Activated CD8-positive, alpha-beta memory T cell treated with anti-CD3 and anti-CD28 coated beads, Interleukin-2, amount 10 ng/mL, durations not matched to agents 7 days and 5 days (primary cell): ENCODE measurements at regions of chr4 and their contacts with region 1.

Region 1: GRCh38 chr4:15756361-15756861 is 21.7 kb upstream of the CD38 start:
- DNase-seq: peak; percentile 91
- ATAC-seq: peak; percentile 86
- H3K4me3 Mint-ChIP-seq: peak overlapping the region; percentile 66
- H3K27ac Mint-ChIP-seq: peak overlapping the region; percentile 93
- H3K4me1 Mint-ChIP-seq: peaks cover 55% of the 10 kb centered on the region
- H3K27me3 Mint-ChIP-seq: no peaks in the 10 kb centered on the region

Region 2: DNA sequence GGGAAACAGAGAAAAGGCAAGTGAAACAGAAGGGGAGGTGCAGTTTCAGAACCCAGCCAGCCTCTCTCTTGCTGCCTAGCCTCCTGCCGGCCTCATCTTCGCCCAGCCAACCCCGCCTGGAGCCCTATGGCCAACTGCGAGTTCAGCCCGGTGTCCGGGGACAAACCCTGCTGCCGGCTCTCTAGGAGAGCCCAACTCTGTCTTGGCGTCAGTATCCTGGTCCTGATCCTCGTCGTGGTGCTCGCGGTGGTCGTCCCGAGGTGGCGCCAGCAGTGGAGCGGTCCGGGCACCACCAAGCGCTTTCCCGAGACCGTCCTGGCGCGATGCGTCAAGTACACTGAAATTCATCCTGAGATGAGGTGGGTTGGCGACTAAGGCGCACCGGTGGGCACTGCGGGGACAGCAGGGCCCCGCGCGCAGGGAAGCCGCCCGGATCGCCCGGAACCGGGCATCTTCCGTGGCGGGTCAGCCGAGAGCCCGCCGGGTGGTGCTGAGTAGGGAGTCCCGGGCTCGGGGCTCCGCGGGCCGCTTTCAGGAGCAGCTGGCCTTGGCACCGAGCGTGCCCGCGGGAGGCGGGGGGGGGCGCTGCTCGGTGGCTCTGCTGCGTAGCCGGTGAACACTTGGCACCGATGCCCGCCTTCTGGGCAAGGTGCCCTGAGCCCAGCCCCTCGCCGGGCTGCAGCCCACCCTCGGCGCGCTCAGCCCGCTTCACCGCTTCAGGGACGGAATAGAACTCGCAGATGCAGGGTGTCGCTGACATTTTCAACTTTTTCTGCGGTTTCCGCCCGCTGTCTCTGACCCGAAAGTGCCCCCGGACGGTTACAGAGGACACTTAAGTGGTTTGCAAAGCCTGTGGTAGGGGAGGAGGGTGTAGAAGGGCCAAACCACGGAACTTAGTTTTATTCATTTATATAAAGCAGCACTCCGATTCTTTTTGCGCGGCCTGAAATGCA is 22.2 kb after region 1 on chr4 and contains the start of gene CD38:
- CTCF ChIA-PET with region 1: interaction called, 146 read pairs
- DNase-seq: peak; percentile 87
- ATAC-seq: peak; percentile 79
- H3K4me3 Mint-ChIP-seq: peak within 1 kb of the TSS; percentile 96
- H3K27ac Mint-ChIP-seq: peak within 1 kb of the TSS; percentile 90
- H3K4me1 Mint-ChIP-seq: peaks cover 75% of the 10 kb centered on the region
- H3K27me3 Mint-ChIP-seq: peaks cover 16% of the 10 kb centered on the region
- total RNA-seq, gene CD38: 151 to 179 TPM

Region 3: DNA sequence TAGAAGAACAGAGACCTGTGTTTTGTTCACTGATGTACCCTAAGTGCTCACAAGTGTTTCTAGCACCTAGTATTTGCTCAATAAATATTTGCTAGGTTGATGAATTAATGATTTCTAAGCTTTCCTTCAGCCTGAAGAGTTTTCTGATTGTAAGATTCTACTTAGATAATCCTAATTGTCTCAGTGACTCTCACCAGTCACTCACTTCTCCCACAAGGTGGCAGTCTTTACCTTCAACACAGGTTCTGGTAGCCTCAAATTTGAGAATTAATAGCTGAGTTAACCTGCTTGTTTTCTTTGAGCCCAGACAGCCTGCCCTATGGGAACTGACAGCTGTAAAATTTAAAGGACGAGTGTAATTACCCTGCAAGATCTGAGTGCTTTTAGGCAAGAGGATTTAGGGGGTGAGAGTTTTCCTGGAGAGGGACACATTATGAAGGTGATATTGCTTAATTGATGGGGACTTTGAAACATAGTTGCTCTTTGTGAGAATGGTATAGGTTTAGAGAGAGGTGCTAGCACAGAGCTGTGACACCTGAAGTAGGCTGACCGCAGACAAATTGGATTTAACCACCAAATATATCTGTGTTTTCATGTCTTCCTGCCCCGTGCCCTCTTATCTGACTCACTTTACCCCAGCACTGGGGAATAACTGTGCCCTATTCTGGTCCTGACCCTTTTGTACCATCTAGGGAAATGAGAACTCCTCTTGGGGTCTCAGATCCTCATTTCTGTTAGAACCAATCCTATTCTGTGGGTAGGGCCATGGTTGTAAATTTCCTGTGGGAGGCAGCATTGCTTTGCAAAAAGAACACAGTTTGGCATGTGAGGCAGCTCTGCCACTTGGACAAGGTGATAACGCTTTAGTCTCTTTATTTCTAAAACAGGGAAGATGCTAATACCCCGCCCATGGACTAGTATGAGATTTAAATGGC is 49.4 kb after region 1 on chr4:
- CTCF ChIA-PET with region 1: interaction called, 11 read pairs
- DNase-seq: no peak
- ATAC-seq: no peak
- H3K4me3 Mint-ChIP-seq: no peak overlapping the region
- H3K27ac Mint-ChIP-seq: no peak overlapping the region
- H3K4me1 Mint-ChIP-seq: peaks cover 51% of the 10 kb centered on the region
- H3K27me3 Mint-ChIP-seq: no peaks in the 10 kb centered on the region